ENCODE measurements at regions of chr18 and their contacts with region 1.

Region 1: GRCh38 chr18:49178736-49179135 is 228.0 kb upstream of the SMAD7 start:
- DNase-seq: no peak
- H3K4me3 Mint-ChIP-seq: no peak overlapping the region
- H3K27ac Mint-ChIP-seq: no peak overlapping the region
- H3K4me1 Mint-ChIP-seq: peaks cover 33% of the 10 kb centered on the region
- H3K27me3 Mint-ChIP-seq: peaks cover 2% of the 10 kb centered on the region

Region 2: GRCh38 chr18:48538531-48539405 is 640.0 kb before region 1 on chr18 and contains the start of gene CTIF:
- intact Hi-C with region 1: loop called (anchors 10 kb)
- DNase-seq: peak; percentile 60
- H3K4me3 Mint-ChIP-seq: peak within 1 kb of the TSS; percentile 90
- H3K27ac Mint-ChIP-seq: peak within 1 kb of the TSS; percentile 58
- H3K4me1 Mint-ChIP-seq: peaks cover 14% of the 10 kb centered on the region
- H3K27me3 Mint-ChIP-seq: peaks cover 30% of the 10 kb centered on the region
- total RNA-seq, gene CTIF: 7.2 and 8.5 TPM in 2 replicates

Region 3: GRCh38 chr18:48800876-48801727 is 377.6 kb before region 1 on chr18:
- intact Hi-C with region 1: loop called (anchors 5 kb)
- DNase-seq: no peak
- H3K4me3 Mint-ChIP-seq: peak overlapping the region; percentile 75
- H3K27ac Mint-ChIP-seq: peak overlapping the region; percentile 99
- H3K4me1 Mint-ChIP-seq: peaks cover 66% of the 10 kb centered on the region
- H3K27me3 Mint-ChIP-seq: no peaks in the 10 kb centered on the region

Region 4: DNA sequence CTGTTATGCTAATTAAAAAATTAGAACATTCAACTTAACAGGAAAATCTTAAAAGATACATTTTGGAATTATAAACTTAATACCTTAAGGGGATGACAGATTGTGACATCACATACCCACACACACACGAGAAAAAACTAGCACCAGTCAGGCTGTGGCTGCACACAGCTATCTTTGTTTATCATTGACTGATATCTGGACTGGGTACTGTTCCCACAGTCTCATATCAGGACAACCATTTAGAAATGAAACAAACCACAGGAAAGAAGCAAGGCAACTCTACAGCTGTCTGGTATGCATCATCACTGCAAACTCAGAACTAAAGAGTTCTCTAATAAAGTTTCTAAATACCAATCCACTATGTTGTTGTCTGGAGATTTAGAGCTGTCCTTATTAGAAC is 17.1 kb before region 1 on chr18:
- intact Hi-C with region 1: loop called (anchors 1 kb)
- DNase-seq: peak; percentile 21
- H3K4me3 Mint-ChIP-seq: no peak overlapping the region
- H3K27ac Mint-ChIP-seq: peak overlapping the region; percentile 29
- H3K4me1 Mint-ChIP-seq: peaks cover 37% of the 10 kb centered on the region
- H3K27me3 Mint-ChIP-seq: no peaks in the 10 kb centered on the region

Region 5: GRCh38 chr18:49459404-49460171 is 280.9 kb after region 1 on chr18:
- intact Hi-C with region 1: loop called (anchors 5 kb)
- DNase-seq: no peak
- H3K4me3 Mint-ChIP-seq: peak overlapping the region; percentile 87
- H3K27ac Mint-ChIP-seq: peak overlapping the region; percentile 74
- H3K4me1 Mint-ChIP-seq: peaks cover 37% of the 10 kb centered on the region
- H3K27me3 Mint-ChIP-seq: peaks cover 5% of the 10 kb centered on the region